A673 (cell line): ENCODE measurements at regions of chr6 and their contacts with region 1.

Region 1: DNA sequence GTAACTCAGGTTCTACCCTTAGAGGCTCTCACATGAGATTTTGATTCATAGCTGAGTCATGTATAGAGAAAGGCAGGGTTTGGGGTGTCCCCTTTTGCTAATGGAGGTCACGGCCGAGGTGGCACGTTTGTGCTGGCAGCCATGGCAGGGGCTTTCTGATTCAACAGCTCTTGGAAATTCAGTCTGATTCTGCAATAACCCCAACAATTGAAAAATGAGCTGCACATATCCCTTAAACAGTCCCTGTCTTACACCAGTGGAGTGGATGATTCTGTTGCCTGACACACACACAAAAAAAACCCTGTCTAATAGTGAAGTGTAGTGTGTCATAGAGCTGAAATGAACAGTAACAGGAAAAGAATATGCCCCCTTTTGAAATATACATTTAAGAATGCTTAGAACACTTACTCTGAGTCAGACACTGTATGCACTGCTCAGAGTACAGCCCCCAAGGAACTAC is 40.4 kb upstream of the ARG1 start:
- DNase-seq: peak; percentile 12
- H3K4me3 ChIP-seq: no peak overlapping the region
- H3K27ac ChIP-seq: peak overlapping the region; percentile 69
- H3K4me1 ChIP-seq: peaks cover 26% of the 10 kb centered on the region
- H3K27me3 ChIP-seq: no peaks in the 10 kb centered on the region
- CTCF ChIP-seq: no peak

Region 2: GRCh38 chr6:130188207-130188899 is 1344.3 kb before region 1 on chr6:
- CTCF ChIA-PET with region 1: interaction called, 10 read pairs
- POLR2A ChIA-PET with region 1: no interaction called
- intact Hi-C with region 1: no loop called
- DNase-seq: no peak
- H3K4me3 ChIP-seq: no peak overlapping the region
- H3K27ac ChIP-seq: no peak overlapping the region
- H3K4me1 ChIP-seq: no peaks in the 10 kb centered on the region
- H3K27me3 ChIP-seq: no peaks in the 10 kb centered on the region
- CTCF ChIP-seq: no peak

Region 3: DNA sequence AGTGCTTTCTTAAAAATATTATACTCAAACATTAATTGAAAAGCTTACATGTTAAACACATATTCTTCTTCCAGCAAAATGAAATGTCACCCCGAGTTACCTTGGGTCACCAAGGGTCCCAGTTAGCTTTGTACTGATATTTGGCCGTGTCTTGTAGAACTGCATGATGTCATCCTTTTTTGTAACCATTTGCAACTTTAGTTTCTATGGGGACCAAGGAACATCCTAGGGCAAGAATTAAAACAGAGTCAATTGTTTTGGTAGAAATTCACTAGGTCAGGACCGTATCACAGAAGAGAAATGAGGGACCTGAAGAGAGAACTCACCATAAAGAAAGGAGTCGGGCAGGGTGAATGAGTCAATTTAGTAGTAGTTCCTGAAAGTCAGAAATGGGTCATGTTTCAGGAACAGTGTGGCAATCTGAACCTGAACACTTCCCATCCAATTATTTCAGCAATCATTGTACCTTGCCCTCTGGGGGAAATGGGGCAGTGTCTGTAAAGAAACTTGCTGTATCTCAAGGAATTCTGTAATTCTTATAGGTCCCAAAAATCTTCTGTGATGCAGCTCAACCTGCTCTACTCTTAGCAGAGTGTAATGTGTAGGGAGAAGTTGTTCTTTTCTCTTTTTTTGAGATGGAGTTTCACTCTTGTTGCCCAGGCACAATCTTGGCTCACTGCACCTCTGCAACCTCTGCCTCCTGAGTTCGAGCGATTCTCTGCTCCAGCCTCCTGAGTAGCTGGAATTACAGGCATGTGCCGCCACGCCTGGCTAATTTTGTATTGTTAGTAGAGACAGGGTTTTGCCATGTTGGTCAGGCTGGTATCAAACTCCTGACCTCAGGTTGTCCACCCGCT is 402.7 kb before region 1 on chr6:
- CTCF ChIA-PET with region 1: no interaction called
- POLR2A ChIA-PET with region 1: no interaction called
- intact Hi-C with region 1: loop called (anchors 5 kb)
- DNase-seq: no peak
- H3K4me3 ChIP-seq: no peak overlapping the region
- H3K27ac ChIP-seq: peak overlapping the region; percentile 21
- H3K4me1 ChIP-seq: peaks cover 40% of the 10 kb centered on the region
- H3K27me3 ChIP-seq: no peaks in the 10 kb centered on the region
- CTCF ChIP-seq: no peak

Region 4: DNA sequence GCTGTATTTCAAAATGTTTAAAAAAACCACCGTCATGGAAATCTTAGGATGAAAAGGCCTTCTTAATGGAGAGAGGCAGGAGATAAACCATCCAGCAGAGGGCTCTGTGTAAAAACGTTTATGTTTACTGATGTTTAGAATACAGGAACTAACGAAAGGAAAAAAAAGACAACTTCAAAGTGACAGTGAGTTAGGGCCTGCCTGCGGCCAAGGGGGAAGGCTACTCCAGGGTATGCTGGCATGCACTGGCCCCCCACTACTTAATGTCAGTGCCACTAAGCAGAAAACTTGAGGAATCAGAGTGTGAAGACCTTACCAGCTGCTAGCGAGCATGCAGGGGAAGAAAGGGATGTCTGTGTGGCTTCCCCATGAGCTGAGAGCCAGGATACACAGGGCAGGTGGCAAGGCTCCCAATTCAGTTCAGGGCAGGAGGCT is 349.6 kb before region 1 on chr6:
- CTCF ChIA-PET with region 1: interaction called, 13 read pairs
- POLR2A ChIA-PET with region 1: no interaction called
- intact Hi-C with region 1: no loop called
- DNase-seq: peak; percentile 78
- H3K4me3 ChIP-seq: no peak overlapping the region
- H3K27ac ChIP-seq: peak overlapping the region; percentile 49
- H3K4me1 ChIP-seq: peaks cover 3% of the 10 kb centered on the region
- H3K27me3 ChIP-seq: no peaks in the 10 kb centered on the region
- CTCF ChIP-seq: peak; percentile 68

Region 5: GRCh38 chr6:131199568-131200272 is 332.9 kb before region 1 on chr6:
- CTCF ChIA-PET with region 1: interaction called, 3 read pairs
- POLR2A ChIA-PET with region 1: no interaction called
- intact Hi-C with region 1: loop called (anchors 2 kb)
- DNase-seq: peak; percentile 90
- H3K4me3 ChIP-seq: no peak overlapping the region
- H3K27ac ChIP-seq: peak overlapping the region; percentile 55
- H3K4me1 ChIP-seq: peaks cover 26% of the 10 kb centered on the region
- H3K27me3 ChIP-seq: no peaks in the 10 kb centered on the region
- CTCF ChIP-seq: peak; percentile 90